ENCODE measurements at regions of chr12 and their contacts with region 1.

Region 1: DNA sequence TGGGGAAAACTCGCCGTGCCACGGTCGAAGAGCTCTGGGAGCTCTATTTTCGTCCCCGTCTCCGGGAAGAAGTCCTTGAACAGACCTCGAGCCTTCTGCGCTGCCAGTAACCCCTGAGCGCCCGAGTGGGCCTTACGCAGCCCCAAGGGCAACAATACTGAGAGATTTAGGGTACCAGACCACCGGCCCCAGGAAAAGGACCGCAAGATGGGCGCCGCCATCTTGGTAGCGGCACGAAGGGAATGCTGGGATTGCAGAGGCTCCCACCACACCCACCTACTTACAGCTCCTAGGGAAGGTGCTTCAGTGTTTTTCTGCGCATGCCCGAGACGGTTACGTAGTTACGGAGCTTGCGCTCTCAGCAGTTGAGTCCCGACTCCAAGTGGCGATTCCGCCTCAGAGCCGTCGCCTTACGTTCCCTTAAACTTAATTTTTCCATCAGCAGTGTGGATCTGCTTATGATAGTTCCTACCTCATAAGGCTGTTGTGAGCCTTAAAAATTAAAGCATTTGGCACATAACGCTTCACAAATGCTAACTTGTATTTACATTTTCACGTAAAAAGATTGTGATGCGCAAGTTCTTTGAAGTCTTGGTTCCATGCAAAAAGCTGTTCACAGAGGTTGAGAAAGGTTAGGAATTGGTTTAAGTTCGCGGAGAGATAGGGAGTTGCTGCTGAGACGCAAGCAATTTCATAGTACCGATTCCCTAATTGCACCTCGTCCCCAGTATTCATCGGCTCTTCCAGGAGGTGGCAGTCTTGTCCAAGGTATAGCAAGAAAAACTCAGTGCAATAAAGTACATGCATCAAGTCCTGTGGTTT is at the start of gene YARS2:
- DNase-seq: peak; percentile 97 to 99
- H3K4me3 ChIP-seq: peak within 1 kb of the TSS; percentile 59
- H3K4me3 Mint-ChIP-seq: peak within 1 kb of the TSS; percentile 87
- H3K27ac Mint-ChIP-seq: peak within 1 kb of the TSS; percentile 94
- H3K4me1 ChIP-seq: peaks cover 16% of the 10 kb centered on the region
- H3K4me1 Mint-ChIP-seq: peaks cover 9% of the 10 kb centered on the region
- H3K27me3 ChIP-seq: no peaks in the 10 kb centered on the region
- H3K27me3 Mint-ChIP-seq: peaks cover 5% of the 10 kb centered on the region
- CTCF ChIP-seq: peak; percentile 88 to 95
- total RNA-seq, gene YARS2: 48.7 and 56.6 TPM in 2 replicates

Region 2: GRCh38 chr12:32399337-32400113 is 356.3 kb before region 1 on chr12 and contains the start of gene FGD4:
- CTCF ChIA-PET with region 1: no interaction called
- POLR2A ChIA-PET with region 1: no interaction called
- intact Hi-C with region 1: loop called (anchors 1 kb)
- DNase-seq: peak; percentile 96 to 97
- H3K4me3 ChIP-seq: peak within 1 kb of the TSS; percentile 93
- H3K4me3 Mint-ChIP-seq: peak within 1 kb of the TSS; percentile 86
- H3K27ac Mint-ChIP-seq: peak within 1 kb of the TSS; percentile 87
- H3K4me1 ChIP-seq: peaks cover 13% of the 10 kb centered on the region
- H3K4me1 Mint-ChIP-seq: peaks cover 14% of the 10 kb centered on the region
- H3K27me3 ChIP-seq: no peaks in the 10 kb centered on the region
- H3K27me3 Mint-ChIP-seq: no peaks in the 10 kb centered on the region
- CTCF ChIP-seq: peak; percentile 68 to 86
- total RNA-seq, gene FGD4: 31.6 and 34.3 TPM in 2 replicates

Region 3: GRCh38 chr12:32737715-32738114 is 18.1 kb before region 1 on chr12:
- CTCF ChIA-PET with region 1: interaction called, 11 read pairs
- POLR2A ChIA-PET with region 1: interaction called, 11 read pairs
- intact Hi-C with region 1: no loop called
- DNase-seq: no peak
- H3K4me3 ChIP-seq: no peak overlapping the region
- H3K4me3 Mint-ChIP-seq: no peak overlapping the region
- H3K27ac Mint-ChIP-seq: no peak overlapping the region
- H3K4me1 ChIP-seq: no peaks in the 10 kb centered on the region; the same call in 1 of the 2 replicates
- H3K4me1 Mint-ChIP-seq: no peaks in the 10 kb centered on the region
- H3K27me3 ChIP-seq: no peaks in the 10 kb centered on the region
- H3K27me3 Mint-ChIP-seq: no peaks in the 10 kb centered on the region
- CTCF ChIP-seq: no peak

Region 4: GRCh38 chr12:32860182-32860581 is 104.3 kb after region 1 on chr12:
- CTCF ChIA-PET with region 1: interaction called, 5 read pairs
- POLR2A ChIA-PET with region 1: interaction called, 5 read pairs
- intact Hi-C with region 1: loop called (anchors 2 kb)
- DNase-seq: peak in 1 of 2 experiments; percentile 37
- H3K4me3 ChIP-seq: no peak overlapping the region
- H3K4me3 Mint-ChIP-seq: peak overlapping the region; percentile 28
- H3K27ac Mint-ChIP-seq: peak overlapping the region; percentile 51
- H3K4me1 ChIP-seq: peaks cover 42% of the 10 kb centered on the region
- H3K4me1 Mint-ChIP-seq: peaks cover 48% of the 10 kb centered on the region
- H3K27me3 ChIP-seq: no peaks in the 10 kb centered on the region
- H3K27me3 Mint-ChIP-seq: no peaks in the 10 kb centered on the region
- CTCF ChIP-seq: no peak

Region 5: GRCh38 chr12:32918890-32919801 is 163.3 kb after region 1 on chr12:
- CTCF ChIA-PET with region 1: interaction called, 30 read pairs
- POLR2A ChIA-PET with region 1: interaction called, 5 read pairs
- intact Hi-C with region 1: loop called (anchors 1 kb)
- DNase-seq: peak in 1 of 2 experiments; percentile 62
- H3K4me3 ChIP-seq: no peak overlapping the region
- H3K4me3 Mint-ChIP-seq: no peak overlapping the region
- H3K27ac Mint-ChIP-seq: no peak overlapping the region
- H3K4me1 ChIP-seq: no peaks in the 10 kb centered on the region
- H3K4me1 Mint-ChIP-seq: no peaks in the 10 kb centered on the region
- H3K27me3 ChIP-seq: no peaks in the 10 kb centered on the region
- H3K27me3 Mint-ChIP-seq: no peaks in the 10 kb centered on the region
- CTCF ChIP-seq: peak; percentile 87 to 90

Region 6: DNA sequence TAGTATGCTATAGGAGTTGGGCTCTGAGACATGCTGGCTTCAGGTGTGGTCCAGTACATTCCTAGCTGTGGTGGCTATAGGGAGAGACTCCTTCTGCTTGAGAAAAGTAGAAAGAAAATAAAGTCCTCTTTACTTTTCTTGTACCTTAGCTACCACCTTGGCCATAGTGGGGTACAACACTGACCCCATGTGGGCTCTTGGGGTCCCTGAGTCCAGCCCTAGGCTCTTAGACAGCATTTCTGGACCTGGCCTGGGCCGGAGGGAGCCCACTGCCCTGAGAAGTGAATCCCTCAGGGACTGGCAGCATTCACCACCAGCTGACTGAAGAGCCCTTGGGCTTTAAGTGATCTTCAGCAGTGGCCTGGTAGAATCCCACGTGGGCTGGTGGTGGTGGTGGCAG is 540.7 kb after region 1 on chr12:
- CTCF ChIA-PET with region 1: no interaction called
- POLR2A ChIA-PET with region 1: no interaction called
- intact Hi-C with region 1: loop called (anchors 10 kb)
- DNase-seq: no peak
- H3K4me3 ChIP-seq: no peak overlapping the region
- H3K4me3 Mint-ChIP-seq: no peak overlapping the region
- H3K27ac Mint-ChIP-seq: no peak overlapping the region
- H3K4me1 ChIP-seq: peaks cover 10% of the 10 kb centered on the region
- H3K4me1 Mint-ChIP-seq: no peaks in the 10 kb centered on the region
- H3K27me3 ChIP-seq: no peaks in the 10 kb centered on the region
- H3K27me3 Mint-ChIP-seq: no peaks in the 10 kb centered on the region
- CTCF ChIP-seq: no peak

Region 7: DNA sequence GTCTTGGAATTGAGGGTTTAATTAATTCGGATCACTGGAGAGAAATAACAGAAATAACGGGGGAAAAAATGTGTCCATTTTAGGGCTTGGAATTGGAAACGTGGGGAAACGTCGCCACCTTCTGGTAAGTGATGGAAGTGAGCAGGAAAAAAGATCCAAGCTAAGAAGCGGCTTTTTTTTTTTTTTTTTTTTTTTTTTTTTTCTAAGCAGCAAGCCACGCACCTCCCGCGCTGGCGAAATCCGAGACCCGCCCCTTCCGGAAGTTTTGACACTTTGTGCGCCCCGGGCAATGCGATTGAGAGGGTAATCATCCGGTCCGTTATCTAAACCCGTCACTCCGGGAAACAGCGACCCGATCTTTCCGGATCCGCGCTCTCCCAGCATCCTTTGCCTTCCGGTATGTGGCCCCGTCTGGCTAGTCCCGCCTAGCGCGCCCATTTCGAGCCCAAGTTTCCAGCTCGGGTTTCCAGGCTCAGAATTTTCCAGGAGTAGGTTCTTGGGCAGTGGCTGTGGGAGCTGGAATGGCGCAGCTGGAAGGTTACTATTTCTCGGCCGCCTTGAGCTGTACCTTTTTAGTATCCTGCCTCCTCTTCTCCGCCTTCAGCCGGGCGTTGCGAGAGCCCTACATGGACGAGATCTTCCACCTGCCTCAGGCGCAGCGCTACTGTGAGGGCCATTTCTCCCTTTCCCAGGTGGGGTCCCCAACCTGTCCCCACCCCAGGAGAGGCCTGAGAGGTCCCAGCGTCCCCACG is 1266.4 kb after region 1 on chr12 and contains the start of gene ALG10:
- CTCF ChIA-PET with region 1: interaction called, 26 read pairs
- POLR2A ChIA-PET with region 1: interaction called, 20 read pairs
- intact Hi-C with region 1: loop called (anchors 1 kb)
- DNase-seq: peak; percentile 98 to 99
- H3K4me3 ChIP-seq: peak within 1 kb of the TSS; percentile 64
- H3K4me3 Mint-ChIP-seq: peak within 1 kb of the TSS; percentile 96
- H3K27ac Mint-ChIP-seq: peak within 1 kb of the TSS; percentile 98
- H3K4me1 ChIP-seq: peaks cover 3% of the 10 kb centered on the region; the same call in 1 of the 2 replicates
- H3K4me1 Mint-ChIP-seq: no peaks in the 10 kb centered on the region
- H3K27me3 ChIP-seq: no peaks in the 10 kb centered on the region
- H3K27me3 Mint-ChIP-seq: no peaks in the 10 kb centered on the region
- CTCF ChIP-seq: peak; percentile 78 to 89
- total RNA-seq, gene ALG10: 14.7 and 18.8 TPM in 2 replicates